HCT116 (cell line): ENCODE measurements at regions of chr10 and their contacts with region 1.

Region 1: GRCh38 chr10:84654671-84655070 is 326.3 kb downstream of the CCSER2 start:
- DNase-seq: no peak
- ATAC-seq: no peak
- H3K4me3 ChIP-seq: no peak overlapping the region
- H3K27ac ChIP-seq: no peak overlapping the region
- H3K4me1 ChIP-seq: no peaks in the 10 kb centered on the region
- H3K27me3 ChIP-seq: peaks cover 34% of the 10 kb centered on the region
- CTCF ChIP-seq: no peak
- POLR2A ChIP-seq: no peak
- RAD21 ChIP-seq: no peak

Region 2: GRCh38 chr10:84600947-84601346 is 53.7 kb before region 1 on chr10:
- CTCF ChIA-PET with region 1: no interaction called
- POLR2A ChIA-PET with region 1: no interaction called
- RAD21 ChIA-PET with region 1: no interaction called
- intact Hi-C with region 1: loop called (anchors 1 kb)
- DNase-seq: no peak
- ATAC-seq: no peak
- H3K4me3 ChIP-seq: no peak overlapping the region
- H3K27ac ChIP-seq: no peak overlapping the region
- H3K4me1 ChIP-seq: no peaks in the 10 kb centered on the region
- H3K27me3 ChIP-seq: peaks cover 32% of the 10 kb centered on the region
- CTCF ChIP-seq: no peak
- POLR2A ChIP-seq: no peak
- RAD21 ChIP-seq: no peak